Heart right ventricle (tissue), 16 donors: ENCODE measurements at regions of chr6 and their contacts with region 1.

Region 1: DNA sequence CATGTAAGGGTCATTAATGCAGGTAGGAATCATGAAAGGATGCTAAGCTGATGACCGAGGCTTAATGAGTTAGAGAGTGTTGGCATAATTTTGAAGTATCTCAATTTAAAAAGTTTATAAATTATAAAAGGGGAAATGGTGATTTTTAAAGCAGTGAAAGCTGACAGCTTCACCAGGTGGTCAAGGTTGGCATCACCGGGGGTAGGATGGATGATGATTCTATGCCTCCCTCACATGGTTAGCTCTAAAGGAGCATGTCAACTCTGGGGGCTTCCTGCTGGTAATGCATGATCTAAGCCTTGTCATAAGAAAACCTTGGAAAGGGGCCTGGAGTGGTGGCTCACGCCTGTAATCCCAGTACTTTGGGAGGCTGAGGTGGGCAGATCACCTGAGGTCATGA is 89.2 kb upstream of the MARCKS start:
- DNase-seq: no peak
- ATAC-seq: no peak
- H3K4me3 ChIP-seq: no peak overlapping the region
- H3K27ac ChIP-seq: no peak overlapping the region
- H3K4me1 ChIP-seq: peaks cover 0 to 13% (median 0%) of the 10 kb centered on the region in 9 donors
- H3K27me3 ChIP-seq: no peaks in the 10 kb centered on the region
- CTCF ChIP-seq: no peak

Region 2: GRCh38 chr6:113039005-113039404 is 729.0 kb before region 1 on chr6:
- intact Hi-C with region 1: no loop called
- DNase-seq: no peak
- ATAC-seq: no peak
- H3K4me3 ChIP-seq: no peak overlapping the region
- H3K27ac ChIP-seq: no peak overlapping the region
- H3K4me1 ChIP-seq: peaks cover 0 to 10% (median 0%) of the 10 kb centered on the region in 9 donors
- H3K27me3 ChIP-seq: no peaks in the 10 kb centered on the region
- CTCF ChIP-seq: no peak

Region 3: DNA sequence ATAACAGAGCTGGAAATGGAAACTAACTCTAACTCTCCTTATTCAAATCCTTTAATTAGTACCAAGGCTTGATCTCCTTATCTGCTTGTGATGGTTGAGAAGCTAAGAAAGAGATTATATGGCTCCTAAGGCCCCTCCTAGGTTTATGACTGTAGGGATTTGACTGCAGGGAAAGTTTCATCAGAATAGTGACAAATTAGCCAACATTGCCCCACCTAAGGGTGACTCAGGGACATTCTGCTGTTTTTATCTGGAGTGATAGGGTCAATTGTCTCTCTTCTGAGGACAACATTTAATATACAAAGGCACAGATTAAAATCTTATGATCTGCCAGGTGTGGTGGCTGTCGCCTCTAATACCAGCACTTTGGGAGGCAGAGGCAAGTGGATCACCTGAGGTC is 48.9 kb before region 1 on chr6:
- intact Hi-C with region 1: loop called in 1 of 10 experiments (anchors 2 kb)
- DNase-seq: no peak
- ATAC-seq: no peak
- H3K4me3 ChIP-seq: no peak overlapping the region
- H3K27ac ChIP-seq: no peak overlapping the region
- H3K4me1 ChIP-seq: peaks cover 0 to 10% (median 0%) of the 10 kb centered on the region in 9 donors
- H3K27me3 ChIP-seq: no peaks in the 10 kb centered on the region
- CTCF ChIP-seq: no peak